ENCODE measurements at regions of chr12 and their contacts with region 1.

Region 1: DNA sequence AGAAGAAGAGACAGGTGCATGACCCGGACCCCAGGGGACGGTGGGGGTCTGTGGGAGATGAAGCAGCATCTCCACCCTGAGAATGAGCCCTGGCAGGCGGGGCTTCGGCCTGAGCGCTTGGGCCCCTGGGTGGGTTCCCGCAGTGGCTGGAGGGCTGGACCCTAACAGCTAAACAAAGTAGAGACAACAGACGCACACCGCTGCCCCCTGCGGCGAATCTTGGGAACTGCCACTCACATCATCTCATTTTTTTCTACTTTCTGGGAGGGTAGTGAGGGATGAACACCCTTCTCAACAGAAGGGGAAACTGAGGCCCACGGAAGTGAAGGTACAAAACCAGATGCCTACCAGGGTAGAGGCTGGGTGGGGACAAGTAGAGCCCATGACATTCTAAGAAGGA is 104.7 kb downstream of the RFLNA start:
- DNase-seq: no peak
- H3K4me3 ChIP-seq: no peak overlapping the region
- H3K27ac ChIP-seq: no peak overlapping the region
- H3K4me1 ChIP-seq: no peaks in the 10 kb centered on the region
- H3K27me3 ChIP-seq: no peaks in the 10 kb centered on the region
- CTCF ChIP-seq: peak; percentile 58 to 69

Region 2: GRCh38 chr12:124441443-124442194 is 42.0 kb after region 1 on chr12:
- CTCF ChIA-PET with region 1: no interaction called
- dilution Hi-C with region 1: loop called (anchors 5 kb)
- in situ Hi-C with region 1: no loop called
- intact Hi-C with region 1: no loop called
- DNase-seq: no peak
- H3K4me3 ChIP-seq: no peak overlapping the region
- H3K27ac ChIP-seq: no peak overlapping the region
- H3K4me1 ChIP-seq: peaks cover 6% of the 10 kb centered on the region
- H3K27me3 ChIP-seq: no peaks in the 10 kb centered on the region
- CTCF ChIP-seq: no peak

Region 3: DNA sequence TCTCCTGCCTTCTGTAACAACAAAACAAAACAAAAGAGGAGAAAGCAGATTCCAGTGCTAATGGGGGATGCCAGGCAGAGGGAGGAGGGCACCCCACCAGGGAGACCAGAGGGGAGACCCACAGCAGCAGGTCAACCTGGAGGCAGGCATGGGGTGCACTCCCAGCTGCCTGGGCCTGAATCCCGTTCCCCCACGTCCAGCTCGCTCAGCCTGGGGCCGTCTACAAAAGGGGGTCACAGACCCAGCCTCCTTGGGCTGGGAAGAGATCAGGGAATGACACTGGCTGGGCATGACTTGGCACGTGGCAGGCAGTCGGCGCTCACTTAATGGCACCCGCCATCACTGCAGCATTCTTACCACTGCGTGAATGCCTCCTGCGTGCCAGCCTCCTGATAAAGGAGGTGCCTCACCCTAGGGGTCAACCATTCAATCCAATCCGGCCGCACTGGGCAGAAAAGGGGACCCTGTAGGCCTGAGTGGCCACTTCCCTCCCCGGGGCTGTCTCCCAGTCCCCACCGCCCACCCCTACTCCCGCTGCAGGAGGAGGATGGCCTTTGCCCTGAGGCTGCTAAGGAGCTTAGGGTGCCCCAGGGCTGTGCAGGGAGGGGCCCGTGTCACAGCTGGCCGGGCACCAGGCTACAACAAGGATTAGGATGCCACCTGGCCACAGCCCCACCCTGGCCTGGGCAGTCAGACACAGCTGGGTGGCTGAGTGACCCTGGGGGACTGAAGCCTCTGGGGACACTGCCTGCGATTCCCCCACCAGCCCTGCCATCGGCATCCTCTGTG is 80.3 kb after region 1 on chr12:
- CTCF ChIA-PET with region 1: no interaction called
- dilution Hi-C with region 1: no loop called
- in situ Hi-C with region 1: no loop called
- intact Hi-C with region 1: no loop called
- DNase-seq: no peak
- H3K4me3 ChIP-seq: no peak overlapping the region
- H3K27ac ChIP-seq: no peak overlapping the region
- H3K4me1 ChIP-seq: peaks cover 19% of the 10 kb centered on the region
- H3K27me3 ChIP-seq: no peaks in the 10 kb centered on the region
- CTCF ChIP-seq: no peak

Measured in mammary epithelial cell (primary cell).